ENCODE measurements at regions of chr18 and their contacts with region 1.

Region 1: GRCh38 chr18:67104700-67105284 is 411.7 kb downstream of the DSEL start:
- DNase-seq: peak; percentile 1 to 68
- ATAC-seq: peak; percentile 89 to 91; a peak in 5 of 6 replicates
- H3K4me3 ChIP-seq: no peak overlapping the region
- H3K27ac ChIP-seq: no peak overlapping the region
- H3K4me1 ChIP-seq: no peaks in the 10 kb centered on the region
- CTCF ChIP-seq: peak; percentile 57
- EP300 ChIP-seq: no peak
- POLR2A ChIP-seq: no peak
- RAD21 ChIP-seq: peak; percentile 35 to 40; a peak in 3 of 5 replicates

Region 2: GRCh38 chr18:66979009-66979408 is 125.8 kb before region 1 on chr18:
- CTCF ChIA-PET with region 1: no interaction called
- POLR2A ChIA-PET with region 1: no interaction called
- DNase-seq: no peak
- ATAC-seq: no peak
- H3K4me3 ChIP-seq: no peak overlapping the region
- H3K27ac ChIP-seq: no peak overlapping the region
- H3K4me1 ChIP-seq: no peaks in the 10 kb centered on the region
- CTCF ChIP-seq: no peak
- EP300 ChIP-seq: no peak
- POLR2A ChIP-seq: no peak
- RAD21 ChIP-seq: no peak

Region 3: GRCh38 chr18:67199993-67200617 is 95.3 kb after region 1 on chr18:
- CTCF ChIA-PET with region 1: interaction called, 16 read pairs
- POLR2A ChIA-PET with region 1: no interaction called
- DNase-seq: peak; percentile 1 to 48
- ATAC-seq: peak; percentile 82 to 91
- H3K4me3 ChIP-seq: no peak overlapping the region
- H3K27ac ChIP-seq: no peak overlapping the region
- H3K4me1 ChIP-seq: no peaks in the 10 kb centered on the region
- CTCF ChIP-seq: peak; percentile 55
- EP300 ChIP-seq: no peak
- POLR2A ChIP-seq: no peak
- RAD21 ChIP-seq: peak; percentile 60 to 64

Region 4: DNA sequence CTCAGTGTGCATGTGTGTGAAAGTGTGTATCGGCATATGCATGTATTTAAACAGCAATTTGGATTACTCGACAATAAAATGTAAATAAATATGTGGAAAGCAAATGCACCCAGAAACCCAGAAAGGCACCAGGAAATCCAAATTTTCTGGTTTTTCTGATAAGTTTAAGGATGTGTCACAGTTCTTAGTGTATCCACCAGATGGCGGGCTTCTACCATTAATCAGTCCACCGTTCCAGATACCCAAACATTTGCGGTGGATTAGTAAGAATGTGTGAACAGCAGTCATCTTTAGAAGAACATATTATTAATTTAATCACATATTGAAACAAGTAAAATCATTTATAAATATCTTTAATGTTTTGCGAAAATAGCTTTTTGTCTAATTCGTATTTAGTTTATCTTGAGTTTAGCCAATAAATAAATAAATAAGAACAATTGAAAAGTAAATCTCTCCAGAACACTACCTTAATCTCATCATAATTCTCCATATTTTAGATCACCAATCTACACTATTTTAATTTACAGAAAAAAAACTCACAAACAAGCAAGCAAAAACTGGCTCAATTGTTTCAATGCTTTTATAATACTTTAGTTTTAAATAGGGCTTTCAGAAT is 112.9 kb after region 1 on chr18:
- CTCF ChIA-PET with region 1: no interaction called
- POLR2A ChIA-PET with region 1: no interaction called
- DNase-seq: peak; percentile 1 to 44
- ATAC-seq: peak; percentile 56 to 75; a peak in 4 of 6 replicates
- H3K4me3 ChIP-seq: no peak overlapping the region
- H3K27ac ChIP-seq: no peak overlapping the region
- H3K4me1 ChIP-seq: no peaks in the 10 kb centered on the region
- CTCF ChIP-seq: peak; percentile 68
- EP300 ChIP-seq: no peak
- POLR2A ChIP-seq: no peak
- RAD21 ChIP-seq: peak; percentile 83 to 87

Measured in A549 (cell line).